ENCODE measurements at regions of chr22 and their contacts with region 1.

Region 1: GRCh38 chr22:30183861-30184278 is 62.7 kb downstream of the LIF start:
- DNase-seq: no peak
- H3K4me3 Mint-ChIP-seq: no peak overlapping the region
- H3K27ac Mint-ChIP-seq: peak overlapping the region; percentile 90
- H3K4me1 Mint-ChIP-seq: peaks cover 91% of the 10 kb centered on the region
- H3K27me3 Mint-ChIP-seq: no peaks in the 10 kb centered on the region

Region 2: GRCh38 chr22:30056015-30056414 is 127.9 kb before region 1 on chr22:
- CTCF ChIA-PET with region 1: no interaction called
- POLR2A ChIA-PET with region 1: no interaction called
- intact Hi-C with region 1: no loop called
- DNase-seq: no peak
- H3K4me3 Mint-ChIP-seq: no peak overlapping the region
- H3K27ac Mint-ChIP-seq: no peak overlapping the region
- H3K4me1 Mint-ChIP-seq: no peaks in the 10 kb centered on the region
- H3K27me3 Mint-ChIP-seq: no peaks in the 10 kb centered on the region

Region 3: DNA sequence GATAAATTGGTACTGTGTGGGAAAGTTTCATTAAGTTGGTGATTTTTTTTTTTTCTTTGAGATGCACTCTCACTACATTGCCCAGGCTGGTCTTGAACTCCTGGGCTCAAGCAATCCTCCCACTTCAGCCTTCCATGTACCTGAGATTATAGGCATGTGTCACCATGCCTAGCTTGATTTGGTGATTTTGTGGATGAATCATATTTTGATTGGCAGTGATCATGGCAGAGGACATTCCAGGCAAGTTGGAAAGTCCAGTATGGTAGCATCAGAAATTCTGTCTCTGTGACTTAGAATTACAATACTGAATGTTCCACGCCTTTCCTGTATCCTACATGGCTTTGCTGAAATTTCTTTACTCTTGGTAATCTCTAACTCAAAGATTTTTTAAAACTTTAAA is 54.2 kb before region 1 on chr22:
- CTCF ChIA-PET with region 1: no interaction called
- POLR2A ChIA-PET with region 1: no interaction called
- intact Hi-C with region 1: no loop called
- DNase-seq: no peak
- H3K4me3 Mint-ChIP-seq: no peak overlapping the region
- H3K27ac Mint-ChIP-seq: no peak overlapping the region
- H3K4me1 Mint-ChIP-seq: peaks cover 12% of the 10 kb centered on the region
- H3K27me3 Mint-ChIP-seq: no peaks in the 10 kb centered on the region

Region 4: GRCh38 chr22:30159561-30160353 is 24.1 kb before region 1 on chr22:
- CTCF ChIA-PET with region 1: interaction called, 8 read pairs
- POLR2A ChIA-PET with region 1: interaction called, 17 read pairs
- intact Hi-C with region 1: loop called (anchors 1 kb)
- DNase-seq: no peak
- H3K4me3 Mint-ChIP-seq: no peak overlapping the region
- H3K27ac Mint-ChIP-seq: peak overlapping the region; percentile 85
- H3K4me1 Mint-ChIP-seq: peaks cover 58% of the 10 kb centered on the region
- H3K27me3 Mint-ChIP-seq: no peaks in the 10 kb centered on the region

Region 5: DNA sequence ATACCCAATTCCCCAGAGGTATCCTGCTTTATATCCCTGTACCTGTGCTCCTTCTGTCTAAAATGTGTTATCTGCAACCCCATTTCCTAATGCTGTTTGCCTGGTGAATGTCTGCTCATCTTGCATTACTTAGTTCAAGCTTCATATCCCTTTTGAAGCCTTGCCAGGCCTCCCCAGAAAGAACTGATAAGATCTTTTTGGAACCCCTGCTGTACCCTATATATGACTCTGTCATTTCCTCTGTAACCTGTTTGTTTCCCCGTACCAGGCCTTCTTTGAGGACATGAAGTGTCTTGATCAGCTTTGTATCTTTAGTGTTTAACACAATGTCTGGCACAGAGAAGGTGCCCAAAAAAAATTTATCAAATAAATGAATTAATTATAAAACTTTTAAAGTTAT is 14.9 kb before region 1 on chr22:
- CTCF ChIA-PET with region 1: interaction called, 15 read pairs
- POLR2A ChIA-PET with region 1: interaction called, 15 read pairs
- intact Hi-C with region 1: loop called (anchors 1 kb)
- DNase-seq: no peak
- H3K4me3 Mint-ChIP-seq: no peak overlapping the region
- H3K27ac Mint-ChIP-seq: no peak overlapping the region
- H3K4me1 Mint-ChIP-seq: peaks cover 9% of the 10 kb centered on the region
- H3K27me3 Mint-ChIP-seq: peaks cover 2% of the 10 kb centered on the region

Region 6: GRCh38 chr22:30196141-30196879 is 12.4 kb after region 1 on chr22:
- CTCF ChIA-PET with region 1: interaction called, 5 read pairs
- POLR2A ChIA-PET with region 1: interaction called, 19 read pairs
- intact Hi-C with region 1: loop called (anchors 1 kb)
- DNase-seq: peak; percentile 84
- H3K4me3 Mint-ChIP-seq: peak overlapping the region; percentile 56
- H3K27ac Mint-ChIP-seq: peak overlapping the region; percentile 97
- H3K4me1 Mint-ChIP-seq: peaks cover 70% of the 10 kb centered on the region
- H3K27me3 Mint-ChIP-seq: no peaks in the 10 kb centered on the region

Region 7: DNA sequence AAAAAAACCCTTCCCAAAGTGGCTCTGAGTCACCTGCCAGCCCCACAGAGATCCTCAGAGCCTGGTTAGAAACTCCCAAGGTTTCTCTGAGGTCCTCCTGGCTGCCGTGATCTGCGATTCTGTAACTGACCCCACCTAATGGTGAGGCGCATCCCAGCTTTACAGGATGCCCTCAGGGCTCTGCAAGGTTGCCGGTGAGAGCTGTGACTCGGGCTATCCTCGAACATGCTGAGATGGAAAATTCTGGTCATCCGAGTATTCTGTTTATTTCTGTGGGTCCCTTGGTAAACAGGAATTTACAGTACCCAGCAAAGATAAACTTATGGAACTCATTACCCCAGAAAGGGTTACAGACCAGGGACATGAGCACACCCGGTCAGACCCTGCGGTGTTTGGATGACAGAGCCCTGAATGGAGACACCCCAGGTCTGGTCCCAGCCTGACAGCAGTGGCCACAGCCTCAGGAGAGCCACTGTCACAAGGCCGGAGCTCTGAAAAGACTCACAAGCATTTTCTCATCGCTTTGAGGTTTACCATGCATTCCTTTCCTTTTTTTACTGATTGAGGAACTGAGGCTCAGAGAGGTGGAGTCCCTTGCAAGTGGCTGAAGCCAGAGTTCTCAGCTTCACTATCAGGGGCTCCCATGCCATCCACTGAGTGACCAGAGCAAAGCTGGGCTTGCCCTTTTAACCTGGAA is 40.4 kb after region 1 on chr22:
- CTCF ChIA-PET with region 1: no interaction called
- POLR2A ChIA-PET with region 1: no interaction called
- intact Hi-C with region 1: loop called (anchors 5 kb)
- DNase-seq: no peak
- H3K4me3 Mint-ChIP-seq: no peak overlapping the region
- H3K27ac Mint-ChIP-seq: no peak overlapping the region
- H3K4me1 Mint-ChIP-seq: peaks cover 69% of the 10 kb centered on the region
- H3K27me3 Mint-ChIP-seq: no peaks in the 10 kb centered on the region

Region 8: GRCh38 chr22:30245985-30246901 is 62.4 kb after region 1 on chr22 and contains the start of gene LIF:
- CTCF ChIA-PET with region 1: interaction called, 10 read pairs
- POLR2A ChIA-PET with region 1: interaction called, 9 read pairs
- intact Hi-C with region 1: loop called (anchors 2 kb)
- DNase-seq: peak; percentile 69
- H3K4me3 Mint-ChIP-seq: peak within 1 kb of the TSS; percentile 90
- H3K27ac Mint-ChIP-seq: peak within 1 kb of the TSS; percentile 94
- H3K4me1 Mint-ChIP-seq: peaks cover 73% of the 10 kb centered on the region
- H3K27me3 Mint-ChIP-seq: no peaks in the 10 kb centered on the region
- total RNA-seq, gene LIF: 176 to 189 TPM

Region 9: DNA sequence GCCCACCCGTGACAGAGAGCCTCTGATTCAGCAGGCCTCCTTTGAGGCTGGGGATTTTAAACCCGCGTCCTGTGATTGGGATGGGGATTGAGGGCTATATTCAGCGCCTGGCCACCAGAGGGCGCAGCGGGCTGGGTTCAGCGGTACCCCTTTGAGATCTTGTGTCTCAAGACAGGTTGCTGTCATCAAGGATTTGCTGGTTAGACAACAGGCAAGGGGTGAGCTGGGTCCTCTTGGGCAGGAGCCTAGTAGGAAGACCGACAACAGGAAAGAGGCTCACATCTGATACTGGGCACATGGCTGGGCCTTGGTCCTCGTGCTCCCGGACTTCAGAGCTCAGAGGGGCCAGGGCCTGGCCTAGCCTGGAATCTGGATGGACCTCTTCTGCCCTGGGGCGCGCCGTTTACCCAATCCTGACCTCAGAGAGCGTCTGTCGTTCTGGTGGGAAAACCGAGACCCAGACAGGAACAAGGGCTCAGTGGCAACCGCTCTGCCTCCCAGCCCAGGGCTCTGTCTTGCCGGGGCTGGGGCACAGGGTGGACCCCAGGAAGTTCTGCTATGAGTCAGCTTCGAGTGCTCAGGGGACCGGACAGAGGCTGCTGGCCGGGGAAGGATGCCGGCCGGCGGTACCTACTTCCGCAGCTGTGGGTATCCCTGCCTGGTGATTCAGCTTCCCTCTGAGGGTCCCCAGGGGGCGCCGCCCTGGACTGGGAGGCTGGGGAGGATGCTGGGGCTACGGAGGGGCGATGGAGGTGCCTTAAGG is 450.8 kb after region 1 on chr22:
- CTCF ChIA-PET with region 1: no interaction called
- POLR2A ChIA-PET with region 1: no interaction called
- intact Hi-C with region 1: no loop called
- DNase-seq: peak; percentile 95
- H3K4me3 Mint-ChIP-seq: peak overlapping the region; percentile 81
- H3K27ac Mint-ChIP-seq: peak overlapping the region; percentile 88
- H3K4me1 Mint-ChIP-seq: peaks cover 20% of the 10 kb centered on the region
- H3K27me3 Mint-ChIP-seq: no peaks in the 10 kb centered on the region

Measured in activated CD4-positive, alpha-beta memory T cell treated with anti-CD3 and anti-CD28 coated beads for 36 hours (primary cell).